CD4-positive, alpha-beta T cell (primary cell): ENCODE measurements at regions of chr11 and their contacts with region 1.

Region 1: GRCh38 chr11:118530408-118531339 is at the start of gene TMEM25:
- DNase-seq: peak; percentile 54 to 82 (median 70)
- ATAC-seq: peak; percentile 84
- H3K4me3 ChIP-seq: peak within 1 kb of the TSS; percentile 73
- H3K4me3 Mint-ChIP-seq: peak within 1 kb of the TSS; percentile 96
- H3K27ac ChIP-seq: peak within 1 kb of the TSS in 1 of 2 donors; percentile 30
- H3K27ac Mint-ChIP-seq: peak within 1 kb of the TSS; percentile 97
- H3K4me1 ChIP-seq: peaks cover 29% of the 10 kb centered on the region
- H3K4me1 Mint-ChIP-seq: peaks cover 47% of the 10 kb centered on the region
- H3K27me3 ChIP-seq: no peaks in the 10 kb centered on the region
- H3K27me3 Mint-ChIP-seq: no peaks in the 10 kb centered on the region
- CTCF ChIP-seq: no peak
- total RNA-seq, gene TMEM25: 18.3 to 18.5 TPM

Region 2: DNA sequence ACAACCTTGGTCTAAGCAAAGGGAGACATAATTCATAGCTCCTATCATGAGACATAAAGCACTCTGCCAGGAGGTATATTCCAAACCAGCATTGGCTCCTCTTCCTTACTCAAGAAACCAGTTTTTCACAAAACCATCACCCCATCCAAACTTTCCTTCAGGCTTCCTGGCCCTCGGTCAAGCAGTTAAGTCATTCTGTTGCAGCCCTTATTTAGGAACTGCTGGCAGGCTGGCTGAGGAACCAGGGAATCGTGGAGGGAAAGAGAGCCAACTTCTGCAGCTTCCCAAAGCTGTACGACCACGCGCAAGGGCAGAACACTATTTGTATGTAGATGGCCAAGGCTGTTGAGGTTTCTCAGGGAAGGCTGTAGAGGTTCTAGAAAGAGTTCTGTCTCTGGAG is 34.4 kb after region 1 on chr11:
- CTCF ChIA-PET with region 1: no interaction called
- POLR2A ChIA-PET with region 1: no interaction called
- intact Hi-C with region 1: loop called (anchors 2 to 5 kb)
- DNase-seq: peak in 1 of 14 experiments; percentile 13
- ATAC-seq: no peak
- H3K4me3 ChIP-seq: no peak overlapping the region
- H3K4me3 Mint-ChIP-seq: peak overlapping the region; percentile 65
- H3K27ac ChIP-seq: no peak overlapping the region
- H3K27ac Mint-ChIP-seq: peak overlapping the region; percentile 95
- H3K4me1 ChIP-seq: peaks cover 12% of the 10 kb centered on the region
- H3K4me1 Mint-ChIP-seq: peaks cover 22% of the 10 kb centered on the region
- H3K27me3 ChIP-seq: no peaks in the 10 kb centered on the region
- H3K27me3 Mint-ChIP-seq: no peaks in the 10 kb centered on the region
- CTCF ChIP-seq: no peak

Region 3: GRCh38 chr11:118660681-118661424 is 130.2 kb after region 1 on chr11:
- CTCF ChIA-PET with region 1: no interaction called
- POLR2A ChIA-PET with region 1: no interaction called
- intact Hi-C with region 1: no loop called
- DNase-seq: no peak
- ATAC-seq: no peak
- H3K4me3 ChIP-seq: no peak overlapping the region
- H3K4me3 Mint-ChIP-seq: no peak overlapping the region
- H3K27ac ChIP-seq: no peak overlapping the region
- H3K27ac Mint-ChIP-seq: no peak overlapping the region
- H3K4me1 ChIP-seq: peaks cover 10% of the 10 kb centered on the region
- H3K4me1 Mint-ChIP-seq: no peaks in the 10 kb centered on the region
- H3K27me3 ChIP-seq: no peaks in the 10 kb centered on the region
- H3K27me3 Mint-ChIP-seq: no peaks in the 10 kb centered on the region
- CTCF ChIP-seq: no peak